CD14-positive monocyte (primary cell): ENCODE measurements at regions of chr22 and their contacts with region 1.

Region 1: DNA sequence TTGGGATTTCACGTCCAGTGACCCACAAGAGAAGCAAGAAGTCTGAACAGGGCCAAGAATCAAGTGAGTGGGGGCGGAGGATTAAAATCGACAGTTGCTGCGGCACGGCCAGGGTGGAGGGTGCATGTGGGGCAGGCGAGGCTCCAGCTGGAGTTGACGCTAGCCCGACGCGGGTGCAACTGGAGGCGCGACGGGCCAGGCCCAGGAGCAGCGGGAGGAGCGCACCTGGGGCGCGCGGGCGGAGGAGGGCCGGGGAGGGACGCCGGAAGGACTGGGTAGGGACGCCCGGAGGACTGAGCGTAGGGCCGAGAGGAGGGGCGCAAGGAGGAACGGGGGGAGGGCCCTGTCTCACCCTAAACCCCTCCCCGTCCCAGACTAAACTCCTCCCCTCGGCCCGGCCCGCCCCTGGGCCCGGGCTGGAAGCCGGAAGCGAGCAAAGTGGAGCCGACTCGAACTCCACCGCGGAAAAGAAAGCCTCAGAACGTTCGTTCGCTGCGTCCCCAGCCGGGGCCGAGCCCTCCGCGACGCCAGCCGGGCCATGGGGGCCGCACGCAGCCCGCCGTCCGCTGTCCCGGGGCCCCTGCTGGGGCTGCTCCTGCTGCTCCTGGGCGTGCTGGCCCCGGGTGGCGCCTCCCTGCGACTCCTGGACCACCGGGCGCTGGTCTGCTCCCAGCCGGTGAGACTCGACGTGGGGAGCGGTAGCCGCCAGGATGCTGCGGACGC is at the start of gene IL17RA:
- DNase-seq: peak; percentile 84 to 90 (median 86)
- H3K4me3 ChIP-seq: peak within 1 kb of the TSS; percentile 89 to 91 (median 91)
- H3K4me3 Mint-ChIP-seq: peak within 1 kb of the TSS; percentile 96 to 99
- H3K27ac ChIP-seq: peak within 1 kb of the TSS; percentile 81 to 92
- H3K27ac Mint-ChIP-seq: peak within 1 kb of the TSS; percentile 90 to 96 (median 95)
- H3K4me1 ChIP-seq: peaks cover 40 to 50% of the 10 kb centered on the region in 2 donors
- H3K4me1 Mint-ChIP-seq: peaks cover 56% of the 10 kb centered on the region
- H3K27me3 ChIP-seq: no peaks in the 10 kb centered on the region
- H3K27me3 Mint-ChIP-seq: peaks cover 0 to 2% (median 0%) of the 10 kb centered on the region in 3 donors
- CTCF ChIP-seq: no peak
- polyA plus RNA-seq, gene IL17RA: 68.3 to 118 (median 96.7) TPM

Region 2: GRCh38 chr22:17098379-17098819 is 13.7 kb after region 1 on chr22:
- intact Hi-C with region 1: loop called in 1 of 2 experiments (anchors 2 kb)
- DNase-seq: peak; percentile 79 to 89 (median 88)
- H3K4me3 ChIP-seq: peak overlapping the region in 1 of 3 experiments; percentile 57
- H3K4me3 Mint-ChIP-seq: peak overlapping the region; percentile 68 to 85
- H3K27ac ChIP-seq: peak overlapping the region; percentile 80 to 87
- H3K27ac Mint-ChIP-seq: peak overlapping the region; percentile 78 to 97 (median 93)
- H3K4me1 ChIP-seq: peaks cover 98 to 100% of the 10 kb centered on the region in 2 donors
- H3K4me1 Mint-ChIP-seq: peaks cover 97% of the 10 kb centered on the region
- H3K27me3 ChIP-seq: no peaks in the 10 kb centered on the region
- H3K27me3 Mint-ChIP-seq: peaks cover 0 to 2% (median 0%) of the 10 kb centered on the region in 3 donors
- CTCF ChIP-seq: no peak

Region 3: GRCh38 chr22:17108717-17109518 is 24.2 kb after region 1 on chr22:
- intact Hi-C with region 1: no loop called
- DNase-seq: peak in 1 of 3 donors; percentile 1
- H3K4me3 ChIP-seq: no peak overlapping the region
- H3K4me3 Mint-ChIP-seq: no peak overlapping the region
- H3K27ac ChIP-seq: peak overlapping the region; percentile 75 to 85
- H3K27ac Mint-ChIP-seq: peak overlapping the region in 5 of 7 donors; percentile 25 to 77 (median 59)
- H3K4me1 ChIP-seq: peaks cover 99 to 100% of the 10 kb centered on the region in 2 donors
- H3K4me1 Mint-ChIP-seq: peaks cover 89% of the 10 kb centered on the region
- H3K27me3 ChIP-seq: no peaks in the 10 kb centered on the region
- H3K27me3 Mint-ChIP-seq: peaks cover 0 to 2% (median 2%) of the 10 kb centered on the region in 3 donors
- CTCF ChIP-seq: no peak

Region 4: DNA sequence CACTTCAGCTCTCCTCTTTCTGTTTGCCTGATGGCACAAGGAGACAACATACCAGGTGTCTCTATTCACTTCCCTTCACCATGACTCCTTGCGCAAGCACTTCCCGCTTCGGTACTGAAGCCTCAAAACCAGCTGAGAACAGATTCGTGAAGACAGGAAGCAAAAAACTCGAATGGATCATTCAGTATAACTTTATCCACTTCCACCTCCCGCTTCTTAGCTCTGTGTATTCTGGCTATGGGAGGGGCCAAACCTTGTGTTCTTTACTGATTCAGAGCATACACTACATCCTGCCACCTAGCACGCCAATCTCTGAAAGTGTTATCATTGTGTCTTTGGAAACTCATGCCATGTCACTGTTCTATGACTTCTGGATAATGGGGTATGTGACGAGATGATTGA is 196.7 kb after region 1 on chr22:
- intact Hi-C with region 1: no loop called
- DNase-seq: peak; percentile 47 to 64 (median 50)
- H3K4me3 ChIP-seq: peak overlapping the region in 1 of 3 experiments; percentile 34
- H3K4me3 Mint-ChIP-seq: peak overlapping the region in 1 of 2 donors; percentile 71
- H3K27ac ChIP-seq: no peak overlapping the region
- H3K27ac Mint-ChIP-seq: peak overlapping the region in 3 of 7 donors; percentile 43 to 82 (median 61)
- H3K4me1 ChIP-seq: peaks cover 9 to 10% of the 10 kb centered on the region in 2 donors
- H3K4me1 Mint-ChIP-seq: peaks cover 24% of the 10 kb centered on the region
- H3K27me3 ChIP-seq: peaks cover 6 to 17% of the 10 kb centered on the region in 2 donors
- H3K27me3 Mint-ChIP-seq: peaks cover 19 to 29% (median 24%) of the 10 kb centered on the region in 3 donors
- CTCF ChIP-seq: no peak